Activated CD4-positive, alpha-beta T cell treated with anti-CD3 and anti-CD28 coated beads, Interleukin-2, amount 10 ng/mL, durations not matched to agents 24 days and 14 days (primary cell): ENCODE measurements at regions of chr10 and their contacts with region 1.

Region 1: DNA sequence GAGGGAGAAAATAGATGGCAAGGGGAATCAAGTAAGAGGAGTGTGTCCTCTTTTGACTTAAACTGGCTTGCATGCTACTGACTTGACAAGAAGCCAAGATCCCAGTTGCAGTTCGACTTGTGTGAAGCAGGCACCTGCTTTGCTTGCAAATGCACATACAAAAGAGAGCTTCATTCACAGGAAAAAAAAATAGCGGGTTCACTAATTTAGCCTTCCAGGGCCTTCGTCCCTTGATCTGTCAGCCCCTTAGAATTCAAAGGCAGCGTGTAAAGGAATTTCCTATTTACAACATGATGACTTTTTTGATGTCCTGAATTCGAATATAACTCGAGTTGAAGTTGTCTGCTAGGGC is 192.1 kb downstream of the CELF2 start:
- DNase-seq: peak; percentile 64
- H3K4me3 Mint-ChIP-seq: peak overlapping the region; percentile 74
- H3K27ac Mint-ChIP-seq: peak overlapping the region; percentile 97
- H3K4me1 Mint-ChIP-seq: peaks cover 86% of the 10 kb centered on the region
- H3K27me3 Mint-ChIP-seq: no peaks in the 10 kb centered on the region

Region 2: DNA sequence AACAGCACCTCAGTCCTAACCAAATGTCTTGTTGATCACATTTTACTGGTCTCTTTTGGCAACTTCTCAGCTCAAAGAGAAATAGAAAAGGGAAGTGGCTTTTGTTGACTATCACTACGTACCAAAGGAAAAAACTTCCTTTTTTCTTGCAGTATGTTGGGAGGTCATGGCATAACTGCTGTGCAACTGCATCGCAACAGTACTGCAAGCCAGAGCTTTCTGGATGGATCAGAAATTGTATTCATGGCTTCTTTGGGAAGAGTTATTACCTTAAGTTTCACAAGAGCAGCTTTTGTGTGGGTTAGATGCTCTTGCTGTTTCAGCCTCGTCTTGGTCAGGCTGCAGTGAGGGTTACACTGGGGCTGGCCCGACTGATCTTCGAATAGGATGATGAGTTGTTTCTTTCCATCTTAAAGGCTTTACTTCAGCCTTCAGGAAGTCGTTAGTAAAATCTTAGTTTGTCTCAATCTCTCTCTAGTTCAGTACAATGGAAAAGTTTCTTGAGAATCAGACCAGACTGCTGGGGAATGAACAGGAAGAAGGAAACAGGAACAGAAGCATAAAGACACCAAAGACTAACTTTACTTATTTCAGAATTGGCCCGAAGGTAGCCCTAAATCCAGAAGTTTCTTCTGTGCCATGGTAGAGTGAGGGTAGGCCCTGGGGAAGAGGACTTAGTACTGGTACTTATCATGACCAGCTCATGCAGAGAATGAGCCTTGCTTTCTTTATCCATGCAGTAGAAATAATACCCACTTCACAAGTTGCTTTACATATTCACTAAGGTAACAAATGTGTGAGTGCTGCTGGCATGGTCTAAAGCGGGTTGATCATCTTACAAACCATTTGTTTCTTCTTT is 38.6 kb before region 1 on chr10:
- intact Hi-C with region 1: loop called (anchors 2 kb)
- DNase-seq: peak; percentile 78
- H3K4me3 Mint-ChIP-seq: no peak overlapping the region
- H3K27ac Mint-ChIP-seq: no peak overlapping the region
- H3K4me1 Mint-ChIP-seq: peaks cover 47% of the 10 kb centered on the region
- H3K27me3 Mint-ChIP-seq: no peaks in the 10 kb centered on the region

Region 3: GRCh38 chr10:11178606-11179515 is 30.9 kb before region 1 on chr10:
- intact Hi-C with region 1: loop called (anchors 1 kb)
- DNase-seq: peak; percentile 96
- H3K4me3 Mint-ChIP-seq: no peak overlapping the region
- H3K27ac Mint-ChIP-seq: peak overlapping the region; percentile 94
- H3K4me1 Mint-ChIP-seq: peaks cover 90% of the 10 kb centered on the region
- H3K27me3 Mint-ChIP-seq: no peaks in the 10 kb centered on the region

Region 4: GRCh38 chr10:11197266-11197712 is 12.5 kb before region 1 on chr10:
- intact Hi-C with region 1: loop called (anchors 1 kb)
- DNase-seq: no peak
- H3K4me3 Mint-ChIP-seq: no peak overlapping the region
- H3K27ac Mint-ChIP-seq: peak overlapping the region; percentile 73
- H3K4me1 Mint-ChIP-seq: peaks cover 85% of the 10 kb centered on the region
- H3K27me3 Mint-ChIP-seq: no peaks in the 10 kb centered on the region

Region 5: DNA sequence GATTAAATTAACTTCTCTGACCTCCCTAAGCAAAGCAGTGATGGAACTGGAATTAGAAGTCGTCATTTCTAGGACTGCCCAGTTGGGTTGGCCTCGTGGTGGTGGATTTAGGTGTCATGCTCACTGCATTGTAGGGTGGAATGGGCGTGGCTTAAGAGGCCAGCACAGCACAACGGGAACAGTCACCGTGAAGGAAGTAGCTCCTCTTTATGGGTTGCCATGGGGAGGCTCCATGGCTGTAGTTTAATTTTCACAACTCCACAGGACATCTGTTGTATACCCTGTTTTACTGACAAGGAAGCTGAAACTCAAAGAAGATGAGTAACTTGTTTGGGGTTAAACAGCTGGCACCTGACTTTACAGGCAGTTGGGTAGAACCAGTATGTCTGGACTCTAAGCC is 16.1 kb after region 1 on chr10:
- intact Hi-C with region 1: loop called (anchors 1 kb)
- DNase-seq: peak; percentile 87
- H3K4me3 Mint-ChIP-seq: peak overlapping the region; percentile 66
- H3K27ac Mint-ChIP-seq: peak overlapping the region; percentile 92
- H3K4me1 Mint-ChIP-seq: peaks cover 71% of the 10 kb centered on the region
- H3K27me3 Mint-ChIP-seq: no peaks in the 10 kb centered on the region

Region 6: DNA sequence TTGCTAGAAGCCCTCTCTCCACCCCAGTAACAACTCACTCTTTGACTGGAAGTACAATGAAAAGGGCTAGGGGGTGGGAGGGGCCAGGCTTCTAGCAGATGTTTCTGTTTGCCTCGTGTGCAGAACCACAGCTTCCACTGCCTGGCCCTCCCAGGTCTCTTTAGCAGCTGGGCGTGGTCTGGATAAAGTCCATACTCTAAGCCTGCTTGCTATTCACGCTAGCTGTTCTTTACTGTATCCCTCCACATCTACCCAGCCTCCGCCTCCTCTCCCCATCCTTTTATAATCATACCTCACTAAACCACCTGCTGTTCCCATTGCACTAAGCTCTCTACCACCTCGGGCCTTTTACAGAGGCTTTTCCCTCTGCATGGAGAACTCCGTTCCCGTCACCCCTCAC is 1428.3 kb after region 1 on chr10:
- intact Hi-C with region 1: no loop called
- DNase-seq: peak; percentile 86
- H3K4me3 Mint-ChIP-seq: no peak overlapping the region
- H3K27ac Mint-ChIP-seq: peak overlapping the region; percentile 45
- H3K4me1 Mint-ChIP-seq: peaks cover 55% of the 10 kb centered on the region
- H3K27me3 Mint-ChIP-seq: no peaks in the 10 kb centered on the region